Activated T-helper 1 cell treated with anti-CD3 and anti-CD28 coated beads, Interleukin-12 subunit alpha, Interleukin-12 subunit beta, Interleukin-2, Interleukin-4 antibody, amounts not matched to agents 30 ng/mL and 10 ng/mL and 1 ng/mL, durations not matched to agents 14 hours and 24 hours and 36 hours (primary cell): ENCODE measurements at regions of chr7 and their contacts with region 1.

Region 1: GRCh38 chr7:22001345-22002004 is 55.8 kb upstream of the CDCA7L start:
- DNase-seq: no peak
- H3K4me3 Mint-ChIP-seq: no peak overlapping the region
- H3K27ac Mint-ChIP-seq: no peak overlapping the region
- H3K4me1 Mint-ChIP-seq: peaks cover 7% of the 10 kb centered on the region
- H3K27me3 Mint-ChIP-seq: peaks cover 8% of the 10 kb centered on the region

Region 2: GRCh38 chr7:20778063-20778721 is 1223.3 kb before region 1 on chr7:
- intact Hi-C with region 1: loop called (anchors 2 kb)
- DNase-seq: no peak
- H3K4me3 Mint-ChIP-seq: no peak overlapping the region
- H3K27ac Mint-ChIP-seq: no peak overlapping the region
- H3K4me1 Mint-ChIP-seq: peaks cover 9% of the 10 kb centered on the region
- H3K27me3 Mint-ChIP-seq: peaks cover 73% of the 10 kb centered on the region

Region 3: GRCh38 chr7:21542891-21543527 is 458.5 kb before region 1 on chr7 and contains the start of gene DNAH11:
- intact Hi-C with region 1: loop called (anchors 10 kb)
- DNase-seq: peak; percentile 21
- H3K4me3 Mint-ChIP-seq: peak within 1 kb of the TSS; percentile 81
- H3K27ac Mint-ChIP-seq: peak within 1 kb of the TSS; percentile 44
- H3K4me1 Mint-ChIP-seq: peaks cover 22% of the 10 kb centered on the region
- H3K27me3 Mint-ChIP-seq: peaks cover 41% of the 10 kb centered on the region
- total RNA-seq, gene DNAH11: 1.3 and 1.7 TPM in 2 replicates

Region 4: GRCh38 chr7:21767300-21767900 is 234.1 kb before region 1 on chr7:
- intact Hi-C with region 1: loop called (anchors 2 kb)
- DNase-seq: peak; percentile 4
- H3K4me3 Mint-ChIP-seq: no peak overlapping the region
- H3K27ac Mint-ChIP-seq: no peak overlapping the region
- H3K4me1 Mint-ChIP-seq: peaks cover 11% of the 10 kb centered on the region
- H3K27me3 Mint-ChIP-seq: peaks cover 7% of the 10 kb centered on the region

Region 5: DNA sequence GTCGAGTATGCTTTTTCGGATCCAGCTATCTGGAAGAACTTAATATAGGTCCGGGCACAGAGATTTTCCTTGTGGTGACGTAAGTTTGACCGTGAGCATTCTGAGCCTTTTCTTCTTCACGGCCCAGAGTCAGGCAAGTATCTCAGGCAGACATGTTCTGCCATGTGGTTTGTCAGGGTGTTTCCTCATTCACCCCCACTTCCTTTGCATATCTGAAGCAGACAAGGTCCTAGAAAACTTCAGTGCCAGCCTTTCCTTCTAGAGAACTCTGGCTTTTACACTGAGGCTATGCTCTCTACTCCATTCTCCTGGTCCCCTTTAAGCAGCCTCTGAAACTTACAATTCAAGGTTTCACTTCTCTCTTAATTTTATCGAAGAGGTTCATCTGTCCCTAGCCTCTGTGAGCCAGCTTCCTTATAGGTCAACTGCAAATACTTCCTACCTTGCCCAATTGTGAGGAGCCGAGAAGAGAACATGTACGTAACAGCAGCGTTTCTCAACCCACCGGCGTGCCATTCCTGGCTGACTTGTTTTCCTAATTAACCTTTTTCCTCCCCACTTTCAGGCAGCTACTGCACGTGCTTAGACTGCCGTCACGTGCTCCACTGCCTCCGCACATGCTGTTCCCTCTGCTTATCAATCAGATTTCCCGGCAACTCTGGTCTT is 103.1 kb before region 1 on chr7:
- intact Hi-C with region 1: loop called (anchors 10 kb)
- DNase-seq: peak; percentile 9
- H3K4me3 Mint-ChIP-seq: peak overlapping the region; percentile 73
- H3K27ac Mint-ChIP-seq: peak overlapping the region; percentile 88
- H3K4me1 Mint-ChIP-seq: peaks cover 22% of the 10 kb centered on the region
- H3K27me3 Mint-ChIP-seq: no peaks in the 10 kb centered on the region

Region 6: DNA sequence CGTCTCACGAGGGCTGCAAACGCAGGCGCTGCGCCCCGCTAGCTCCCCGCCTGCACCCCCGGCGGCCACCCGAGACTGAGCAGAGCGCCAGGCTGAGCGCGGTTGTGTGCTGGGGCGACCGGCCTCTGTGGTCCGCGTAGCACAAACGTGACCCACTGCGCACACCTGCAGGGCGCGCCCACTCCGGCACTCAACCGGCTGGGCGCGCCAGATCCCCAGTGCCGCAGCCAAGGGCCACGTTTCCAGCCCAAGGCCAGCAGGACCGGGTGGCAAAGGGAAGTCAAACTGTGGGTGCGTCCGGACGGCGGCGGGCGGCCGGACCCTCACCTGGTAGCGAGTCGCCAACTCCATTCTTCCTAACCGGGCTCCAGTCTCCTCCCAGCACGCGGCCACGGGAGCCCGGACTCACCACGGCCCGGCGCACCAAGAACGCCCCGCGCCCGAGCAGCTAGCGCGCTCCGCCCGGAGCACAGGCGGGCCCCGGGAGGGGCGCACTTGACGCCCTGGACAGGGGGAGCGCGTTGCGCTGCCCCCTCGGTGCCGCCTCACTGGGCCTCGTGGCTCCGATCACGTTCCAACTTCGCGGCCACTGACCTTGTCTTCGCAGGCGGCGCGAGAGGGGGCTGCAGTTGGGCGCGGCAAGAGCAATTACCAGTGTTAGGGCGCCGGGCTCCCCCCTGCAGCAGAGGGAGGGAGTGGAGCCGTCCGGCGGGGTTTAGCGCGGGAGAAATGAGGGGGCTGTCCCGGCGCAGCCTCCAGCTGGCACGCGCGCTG is 55.8 kb before region 1 on chr7 and contains the start of gene CDCA7L:
- intact Hi-C with region 1: loop called (anchors 2 kb)
- DNase-seq: peak; percentile 54
- H3K4me3 Mint-ChIP-seq: peak within 1 kb of the TSS; percentile 94
- H3K27ac Mint-ChIP-seq: peak within 1 kb of the TSS; percentile 95
- H3K4me1 Mint-ChIP-seq: peaks cover 69% of the 10 kb centered on the region
- H3K27me3 Mint-ChIP-seq: peaks cover 16% of the 10 kb centered on the region
- total RNA-seq, gene CDCA7L: 102 and 113 TPM in 2 replicates

Region 7: DNA sequence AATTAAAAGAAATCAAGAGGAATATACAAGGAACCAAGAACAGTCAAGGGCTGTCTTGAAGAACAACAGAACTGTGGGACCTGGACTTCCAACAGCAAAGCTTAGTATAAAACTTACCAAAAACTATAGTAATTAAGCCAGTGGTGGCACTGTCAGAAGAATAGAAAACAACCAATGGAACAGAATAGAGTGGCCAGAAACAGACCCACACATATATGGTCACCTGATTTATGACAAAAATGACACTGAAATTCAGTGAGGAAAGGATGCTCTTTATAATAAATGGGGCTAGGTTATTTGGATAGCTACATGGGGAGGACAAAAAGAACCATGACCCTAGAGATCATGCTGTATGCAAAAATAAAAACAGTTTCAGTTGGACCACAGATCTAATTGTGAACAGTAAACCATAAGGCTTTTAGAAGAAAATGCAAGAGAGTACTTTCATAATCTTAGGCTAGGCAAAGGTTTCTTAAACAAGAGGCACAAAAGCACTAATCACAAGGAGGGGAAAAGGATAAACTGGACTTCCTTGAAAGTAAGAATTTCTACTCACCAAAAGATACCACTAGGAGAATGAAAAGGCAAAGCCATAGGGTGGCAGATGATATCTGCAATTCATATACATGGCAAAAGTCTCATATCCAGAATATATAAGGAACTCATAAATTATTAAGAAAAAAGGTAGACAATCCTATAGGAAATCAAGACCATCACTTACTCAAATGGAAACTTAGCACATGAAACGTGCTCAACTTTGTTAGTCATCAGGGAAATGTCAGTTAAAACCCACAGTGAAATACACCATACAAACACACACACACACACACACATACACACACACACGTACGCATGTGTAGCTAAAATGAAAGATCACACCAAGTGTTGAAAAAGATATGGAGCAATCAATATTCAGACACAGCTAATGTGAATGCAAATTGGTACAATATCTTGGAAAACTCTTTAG is 991.7 kb after region 1 on chr7:
- intact Hi-C with region 1: no loop called
- DNase-seq: no peak
- H3K4me3 Mint-ChIP-seq: peak overlapping the region; percentile 43
- H3K27ac Mint-ChIP-seq: peak overlapping the region; percentile 77
- H3K4me1 Mint-ChIP-seq: peaks cover 52% of the 10 kb centered on the region
- H3K27me3 Mint-ChIP-seq: no peaks in the 10 kb centered on the region